Endothelial cell of umbilical vein (primary cell): ENCODE measurements at regions of chr15 and their contacts with region 1.

Region 1: DNA sequence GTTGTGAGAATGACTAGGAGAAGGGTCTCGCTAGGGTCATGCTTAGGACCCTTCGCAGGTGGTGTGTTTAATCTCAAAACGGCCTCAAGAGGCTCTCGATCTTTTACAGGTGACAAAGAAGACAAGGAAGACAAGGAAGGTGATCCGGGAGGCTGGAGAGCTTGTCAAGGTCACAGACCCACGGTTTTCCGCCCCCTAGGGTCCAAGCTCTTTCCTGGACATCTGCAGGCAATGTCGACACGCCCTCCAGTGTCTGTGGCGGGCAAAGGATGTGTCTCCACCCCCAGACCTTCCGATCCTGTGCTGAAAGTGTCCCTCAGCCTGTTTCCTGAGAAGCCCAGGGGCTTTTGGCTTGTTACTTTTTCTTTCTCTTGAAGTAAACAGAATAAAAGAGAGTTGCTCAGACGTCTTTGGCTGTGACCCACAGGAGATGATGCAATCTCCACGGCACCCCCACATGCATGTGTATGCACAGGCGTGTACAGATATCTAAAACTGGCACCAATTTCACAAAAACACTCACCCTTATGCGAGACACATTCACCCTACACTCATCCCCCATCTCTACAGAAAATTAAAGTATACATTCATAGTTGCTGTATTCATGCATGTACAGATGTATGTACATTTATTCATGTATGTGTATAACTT is 108.8 kb downstream of the KLF13 start:
- DNase-seq: peak; percentile 54
- H3K4me3 ChIP-seq: peak overlapping the region in 1 of 3 experiments; percentile 50
- H3K27ac ChIP-seq: peak overlapping the region; percentile 98
- H3K4me1 ChIP-seq: peaks cover 20% of the 10 kb centered on the region
- H3K27me3 ChIP-seq: no peaks in the 10 kb centered on the region
- CTCF ChIP-seq: peak; percentile 69 to 71
- POLR2A ChIP-seq: no peak

Region 2: GRCh38 chr15:31200735-31201151 is 234.6 kb before region 1 on chr15:
- CTCF ChIA-PET with region 1: interaction called, 12 read pairs
- POLR2A ChIA-PET with region 1: no interaction called
- dilution Hi-C with region 1: no loop called
- intact Hi-C with region 1: no loop called
- DNase-seq: peak; percentile 24
- H3K4me3 ChIP-seq: no peak overlapping the region
- H3K27ac ChIP-seq: no peak overlapping the region
- H3K4me1 ChIP-seq: no peaks in the 10 kb centered on the region
- H3K27me3 ChIP-seq: no peaks in the 10 kb centered on the region
- CTCF ChIP-seq: peak; percentile 22 to 24
- POLR2A ChIP-seq: no peak

Region 3: DNA sequence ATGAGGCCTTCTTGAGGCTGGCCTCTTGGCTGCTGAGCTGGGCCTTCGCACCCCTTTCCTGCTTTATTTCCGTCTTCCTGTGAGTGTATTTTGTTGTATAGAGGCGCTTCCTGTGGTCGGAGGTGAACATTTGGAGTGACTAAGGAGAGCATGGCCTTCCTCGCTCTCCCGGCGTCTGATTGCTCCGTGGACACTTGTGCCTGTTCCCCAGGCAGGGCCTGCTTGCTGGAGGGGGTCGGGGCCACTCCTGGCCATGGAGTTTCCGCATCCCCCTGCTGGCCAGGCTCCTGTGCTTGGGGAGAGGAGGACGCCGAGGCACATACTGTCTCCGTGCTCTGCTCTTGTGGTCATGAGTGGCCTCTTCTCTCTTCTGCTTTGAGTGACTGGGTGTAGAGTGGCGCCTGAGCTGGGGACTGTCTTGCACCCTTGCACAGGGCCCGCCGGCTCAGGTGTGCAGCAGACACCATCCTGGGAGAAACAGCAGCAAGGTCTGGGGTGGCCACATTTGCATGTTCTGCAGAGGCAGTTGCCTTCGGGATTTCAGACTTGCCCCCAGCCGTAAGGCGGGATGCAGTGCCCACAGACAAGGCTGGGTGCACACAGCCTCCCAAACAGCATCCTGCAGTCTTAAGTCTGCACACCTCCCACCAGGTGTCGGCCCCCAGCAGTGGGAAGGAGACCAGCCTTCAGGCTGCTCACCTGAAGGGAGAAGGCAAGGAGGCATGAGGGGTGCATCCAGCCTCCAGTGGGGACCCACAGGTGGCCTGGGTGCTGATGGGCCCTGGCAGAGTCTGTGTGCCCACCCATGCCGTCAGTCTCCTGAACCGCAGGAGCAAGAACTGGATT is 92.4 kb before region 1 on chr15:
- CTCF ChIA-PET with region 1: interaction called, 17 read pairs
- POLR2A ChIA-PET with region 1: no interaction called
- dilution Hi-C with region 1: no loop called
- intact Hi-C with region 1: loop called (anchors 1 kb)
- DNase-seq: peak; percentile 82
- H3K4me3 ChIP-seq: no peak overlapping the region
- H3K27ac ChIP-seq: peak overlapping the region; percentile 28
- H3K4me1 ChIP-seq: peaks cover 21% of the 10 kb centered on the region
- H3K27me3 ChIP-seq: no peaks in the 10 kb centered on the region
- CTCF ChIP-seq: peak in 1 of 2 donors; percentile 55
- POLR2A ChIP-seq: no peak

Region 4: DNA sequence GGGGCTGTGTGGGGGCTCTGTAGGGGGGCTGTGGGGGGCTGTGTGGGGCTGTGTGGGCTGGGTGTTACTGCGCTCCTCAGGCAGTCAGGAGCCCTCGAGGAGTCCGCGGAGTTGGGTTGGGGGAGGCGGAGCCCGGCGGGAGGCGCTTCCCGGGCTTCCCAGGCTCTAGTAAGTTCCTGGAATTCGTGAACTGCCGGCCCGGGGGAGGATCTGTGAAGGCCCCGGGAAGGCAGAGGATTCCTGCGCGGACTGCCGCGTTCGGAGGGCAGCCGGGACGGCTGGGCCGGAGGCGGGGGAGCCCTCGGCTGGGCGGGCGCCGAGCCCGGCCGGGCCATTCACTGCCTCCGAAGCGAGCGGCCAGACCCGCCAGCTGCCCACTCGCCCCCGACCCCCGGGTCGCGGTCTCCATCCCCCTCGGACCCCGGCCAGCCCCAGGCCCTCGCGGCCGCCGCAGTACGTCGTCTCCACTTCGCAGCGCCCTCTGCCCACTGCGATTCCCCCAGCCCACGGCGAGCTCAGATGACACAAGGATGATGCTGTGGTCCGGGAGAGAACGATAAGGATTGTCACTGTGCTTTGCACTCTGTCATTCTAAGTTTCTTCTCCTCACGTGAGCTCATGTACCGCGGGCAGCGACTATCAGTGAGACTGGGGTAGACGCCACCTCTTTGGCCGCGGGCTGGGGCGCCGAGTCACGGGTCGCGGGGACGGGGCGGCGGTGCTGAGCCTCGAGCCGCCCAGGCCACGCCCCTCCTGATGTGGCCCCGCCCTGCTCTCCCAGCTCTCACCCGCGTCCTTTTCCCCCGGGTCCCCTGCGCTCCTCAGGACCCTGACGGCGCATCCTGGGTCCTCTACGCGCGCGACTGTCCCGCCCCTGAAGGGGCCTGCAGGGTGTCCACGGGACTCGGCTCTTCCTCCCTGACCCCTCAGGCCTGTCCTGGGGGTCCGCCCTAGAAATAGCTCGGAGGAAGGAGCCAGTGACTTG is 43.4 kb before region 1 on chr15:
- CTCF ChIA-PET with region 1: interaction called, 16 read pairs
- POLR2A ChIA-PET with region 1: no interaction called
- dilution Hi-C with region 1: no loop called
- intact Hi-C with region 1: loop called (anchors 1 kb)
- DNase-seq: peak; percentile 50
- H3K4me3 ChIP-seq: peak overlapping the region; percentile 40 to 56 (median 46)
- H3K27ac ChIP-seq: peak overlapping the region; percentile 5
- H3K4me1 ChIP-seq: peaks cover 13% of the 10 kb centered on the region
- H3K27me3 ChIP-seq: peaks cover 2 to 5% of the 10 kb centered on the region in 2 experiments
- CTCF ChIP-seq: no peak
- POLR2A ChIP-seq: no peak

Region 5: GRCh38 chr15:31447931-31448634 is 12.7 kb after region 1 on chr15:
- CTCF ChIA-PET with region 1: interaction called, 17 read pairs
- POLR2A ChIA-PET with region 1: interaction called, 4 read pairs
- dilution Hi-C with region 1: no loop called
- intact Hi-C with region 1: loop called (anchors 2 kb)
- DNase-seq: no peak
- H3K4me3 ChIP-seq: no peak overlapping the region
- H3K27ac ChIP-seq: no peak overlapping the region
- H3K4me1 ChIP-seq: peaks cover 14% of the 10 kb centered on the region
- H3K27me3 ChIP-seq: no peaks in the 10 kb centered on the region
- CTCF ChIP-seq: no peak
- POLR2A ChIP-seq: no peak

Region 6: GRCh38 chr15:31458591-31459399 is 23.4 kb after region 1 on chr15:
- CTCF ChIA-PET with region 1: no interaction called
- POLR2A ChIA-PET with region 1: no interaction called
- dilution Hi-C with region 1: no loop called
- intact Hi-C with region 1: no loop called
- DNase-seq: no peak
- H3K4me3 ChIP-seq: no peak overlapping the region
- H3K27ac ChIP-seq: no peak overlapping the region
- H3K4me1 ChIP-seq: no peaks in the 10 kb centered on the region
- H3K27me3 ChIP-seq: peaks cover 0 to 6% of the 10 kb centered on the region in 2 experiments
- CTCF ChIP-seq: no peak
- POLR2A ChIP-seq: no peak